ENCODE measurements at regions of chr13 and their contacts with region 1.

Region 1: DNA sequence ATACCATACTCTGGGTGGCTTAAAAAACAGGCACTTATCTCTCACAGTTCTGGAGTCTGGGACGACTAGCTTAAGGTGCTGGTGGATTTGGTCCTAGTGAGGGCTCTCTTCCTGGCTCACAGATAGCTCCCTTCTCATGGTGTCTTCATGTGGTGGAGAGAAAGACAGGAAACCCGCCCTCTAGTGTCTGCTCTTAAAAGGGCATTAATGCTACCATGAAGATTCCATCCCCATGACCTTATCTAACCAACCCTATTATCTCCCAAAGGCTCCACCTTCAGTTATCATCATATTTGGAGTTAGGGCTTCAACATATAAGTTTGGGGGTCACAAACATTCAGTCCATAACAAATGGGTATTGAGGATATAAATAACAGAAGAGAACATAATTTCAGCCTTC is 139.4 kb downstream of the HS6ST3 start:
- DNase-seq: no peak
- H3K4me3 ChIP-seq: no peak overlapping the region
- H3K27ac ChIP-seq: no peak overlapping the region
- H3K4me1 ChIP-seq: no peaks in the 10 kb centered on the region
- H3K27me3 ChIP-seq: no peaks in the 10 kb centered on the region
- CTCF ChIP-seq: peak; percentile 32 to 65 (median 47)

Region 2: DNA sequence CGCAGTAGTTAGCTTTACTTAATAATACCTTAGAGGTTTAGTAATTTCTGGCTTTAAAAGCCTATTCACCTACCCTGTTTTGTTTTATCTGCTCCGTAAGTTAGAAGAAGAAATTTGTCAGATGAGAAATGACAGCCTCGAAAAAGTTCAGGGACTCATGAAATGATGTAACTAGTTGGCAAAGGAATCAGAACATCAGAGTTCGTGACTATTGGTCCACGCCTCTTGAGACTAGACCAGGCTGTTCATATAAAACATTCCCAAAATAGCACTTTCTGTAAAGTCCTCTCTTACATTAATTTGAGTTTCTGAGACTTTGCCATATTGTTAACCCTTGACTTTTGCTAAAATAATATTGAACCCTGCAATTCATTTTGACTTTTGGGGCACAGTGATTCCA is 47.4 kb before region 1 on chr13:
- dilution Hi-C with region 1: loop called (anchors 5 kb)
- DNase-seq: no peak
- H3K4me3 ChIP-seq: no peak overlapping the region
- H3K27ac ChIP-seq: no peak overlapping the region
- H3K4me1 ChIP-seq: no peaks in the 10 kb centered on the region
- H3K27me3 ChIP-seq: no peaks in the 10 kb centered on the region
- CTCF ChIP-seq: no peak

Region 3: DNA sequence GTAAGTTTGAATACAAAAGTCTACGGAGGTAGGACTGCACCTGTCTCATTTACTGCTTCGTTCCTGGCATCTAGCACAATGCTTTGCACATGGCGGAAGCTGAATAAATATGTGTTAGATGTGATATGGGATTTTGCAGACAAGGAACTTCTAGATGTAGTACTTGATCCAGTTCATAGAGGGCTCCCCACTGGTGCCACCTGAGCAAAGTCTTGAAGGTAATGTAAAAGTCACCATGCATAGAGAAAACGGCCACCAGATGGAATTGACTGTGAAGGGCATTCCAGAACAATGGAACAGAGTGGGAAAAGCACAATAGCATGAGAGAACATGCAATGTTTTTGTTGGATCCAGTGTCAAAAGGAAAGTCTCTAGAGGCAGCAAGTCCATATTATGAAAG is 69.9 kb after region 1 on chr13:
- dilution Hi-C with region 1: no loop called
- DNase-seq: no peak
- H3K4me3 ChIP-seq: no peak overlapping the region
- H3K27ac ChIP-seq: no peak overlapping the region
- H3K4me1 ChIP-seq: no peaks in the 10 kb centered on the region
- H3K27me3 ChIP-seq: no peaks in the 10 kb centered on the region
- CTCF ChIP-seq: no peak